Naive thymus-derived CD8-positive, alpha-beta T cell (primary cell): ENCODE measurements at regions of chr3 and their contacts with region 1.

Region 1: GRCh38 chr3:44510000-44510368 is 32.5 kb upstream of the ZNF445 start:
- DNase-seq: no peak
- ATAC-seq: peak; percentile 22 to 34
- H3K4me3 Mint-ChIP-seq: peak overlapping the region; percentile 93 to 100 (median 97)
- H3K27ac Mint-ChIP-seq: peak overlapping the region; percentile 95 to 98 (median 96)
- H3K4me1 Mint-ChIP-seq: peaks cover 8 to 56% (median 52%) of the 10 kb centered on the region in 4 donors
- H3K27me3 Mint-ChIP-seq: no peaks in the 10 kb centered on the region

Region 2: DNA sequence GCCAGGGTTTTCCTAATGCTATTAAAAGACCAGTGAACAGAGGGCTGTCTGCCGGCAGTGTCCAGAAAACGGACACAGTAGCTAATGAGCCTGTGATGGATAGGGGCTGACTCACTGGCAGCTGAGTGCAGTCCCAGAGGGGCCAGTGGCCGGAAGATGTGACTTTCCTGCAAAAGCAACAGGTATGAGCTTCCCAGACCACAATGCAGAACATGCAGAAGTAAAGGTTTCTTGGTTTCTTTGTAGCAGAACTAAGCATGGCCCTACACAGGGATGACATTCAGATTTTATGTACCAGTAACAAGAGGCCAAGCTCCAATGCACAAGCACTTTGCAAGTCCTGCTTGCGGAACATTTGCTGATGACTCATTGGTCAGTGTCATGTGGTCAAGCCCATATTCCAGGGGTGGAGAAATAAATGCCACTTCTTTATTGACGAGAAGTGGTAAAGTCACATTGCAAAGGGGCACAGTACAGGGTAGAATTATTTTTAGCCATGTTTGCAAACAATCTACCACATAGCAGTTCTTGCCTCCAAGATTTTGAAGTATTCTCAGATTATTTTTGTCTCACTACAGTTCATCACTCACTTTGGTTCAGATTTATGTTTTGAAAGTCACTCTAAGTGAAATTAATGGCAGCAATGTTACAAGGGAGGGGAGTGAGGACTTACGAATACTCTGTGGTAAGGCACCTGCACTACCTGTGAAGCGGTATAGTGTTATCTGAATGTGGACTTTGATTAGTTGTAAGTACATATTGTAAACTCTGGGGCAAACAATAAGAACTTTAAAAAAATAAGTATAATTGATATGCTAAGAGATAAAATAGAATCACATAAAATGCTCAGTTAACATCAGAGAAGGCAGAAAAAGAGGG is 555.9 kb before region 1 on chr3:
- POLR2A ChIA-PET with region 1: no interaction called
- DNase-seq: no peak
- ATAC-seq: no peak
- H3K4me3 Mint-ChIP-seq: no peak overlapping the region
- H3K27ac Mint-ChIP-seq: no peak overlapping the region
- H3K4me1 Mint-ChIP-seq: peaks cover 2 to 14% (median 8%) of the 10 kb centered on the region in 4 donors
- H3K27me3 Mint-ChIP-seq: peaks cover 6 to 19% (median 15%) of the 10 kb centered on the region in 5 donors

Region 3: DNA sequence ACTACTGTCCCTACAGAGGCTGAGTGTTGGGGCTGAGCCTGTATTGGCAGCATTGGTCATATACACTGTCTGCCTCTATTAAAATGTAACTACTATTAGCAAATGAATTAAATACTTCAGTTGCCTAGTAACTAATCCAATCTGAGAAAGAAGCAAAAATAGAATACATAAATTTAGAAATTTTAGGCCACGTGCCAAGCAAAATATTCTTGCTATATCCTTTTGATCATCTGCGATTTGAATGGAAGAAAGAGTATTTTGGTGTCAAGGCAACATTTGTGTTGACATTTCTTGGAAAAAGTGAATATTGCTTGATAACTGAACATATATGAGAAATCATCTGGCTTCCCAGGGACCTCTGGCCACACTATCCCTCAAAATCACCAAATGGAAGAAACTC is 416.5 kb before region 1 on chr3:
- POLR2A ChIA-PET with region 1: no interaction called
- DNase-seq: no peak
- ATAC-seq: no peak
- H3K4me3 Mint-ChIP-seq: no peak overlapping the region
- H3K27ac Mint-ChIP-seq: no peak overlapping the region
- H3K4me1 Mint-ChIP-seq: no peaks in the 10 kb centered on the region
- H3K27me3 Mint-ChIP-seq: peaks cover 0 to 54% (median 12%) of the 10 kb centered on the region in 5 donors

Region 4: GRCh38 chr3:44284949-44285348 is 225.0 kb before region 1 on chr3:
- POLR2A ChIA-PET with region 1: no interaction called
- DNase-seq: no peak
- ATAC-seq: no peak
- H3K4me3 Mint-ChIP-seq: no peak overlapping the region
- H3K27ac Mint-ChIP-seq: no peak overlapping the region
- H3K4me1 Mint-ChIP-seq: no peaks in the 10 kb centered on the region
- H3K27me3 Mint-ChIP-seq: peaks cover 1 to 14% (median 9%) of the 10 kb centered on the region in 5 donors

Region 5: GRCh38 chr3:44338010-44338827 is 171.8 kb before region 1 on chr3 and contains the start of gene TCAIM:
- POLR2A ChIA-PET with region 1: interaction called, 23 read pairs
- DNase-seq: peak; percentile 98 to 100 (median 99)
- ATAC-seq: peak; percentile 91 to 93
- H3K4me3 Mint-ChIP-seq: peak within 1 kb of the TSS; percentile 92 to 99 (median 97)
- H3K27ac Mint-ChIP-seq: peak within 1 kb of the TSS; percentile 87 to 99 (median 98)
- H3K4me1 Mint-ChIP-seq: peaks cover 12 to 38% (median 33%) of the 10 kb centered on the region in 4 donors
- H3K27me3 Mint-ChIP-seq: peaks cover 0 to 7% (median 5%) of the 10 kb centered on the region in 5 donors
- polyA plus RNA-seq, gene TCAIM: 12.1 to 14.0 (median 13.1) TPM

Region 6: DNA sequence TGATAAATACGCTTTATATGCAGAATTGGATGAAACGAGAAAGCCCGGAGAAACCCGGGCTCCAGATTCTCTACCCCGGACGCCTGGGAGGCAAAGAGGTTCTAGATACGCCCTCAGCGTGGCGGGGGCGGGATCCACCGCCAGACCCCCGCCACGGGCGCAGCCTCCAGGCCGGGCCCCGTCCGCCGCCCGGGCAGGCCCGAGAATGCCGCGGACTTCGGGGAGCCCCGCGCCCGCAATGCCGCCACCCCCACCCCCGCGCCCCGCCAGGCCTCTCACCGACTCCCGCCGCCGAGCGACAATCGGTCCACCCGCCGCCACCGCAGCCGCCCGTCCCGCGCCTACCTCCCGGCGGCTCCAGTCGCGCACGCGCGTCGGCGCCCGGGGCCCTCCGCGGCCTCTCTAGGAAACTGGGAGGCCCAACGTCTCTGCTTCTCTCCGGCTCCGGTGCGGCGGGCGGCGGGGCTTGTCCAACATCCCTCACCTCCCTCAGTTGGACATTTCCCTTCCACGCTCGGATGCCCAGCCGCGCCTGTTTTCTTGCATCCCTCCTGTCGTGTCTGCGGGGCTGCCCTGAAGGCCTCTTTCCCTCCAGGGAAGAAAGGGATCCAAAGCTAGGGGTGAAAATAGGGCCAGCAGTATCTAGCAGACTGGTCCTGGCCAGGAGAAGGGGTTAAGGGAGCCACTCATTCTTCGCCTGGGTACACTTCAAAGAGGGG is 32.5 kb before region 1 on chr3 and contains the start of gene ZNF445:
- POLR2A ChIA-PET with region 1: interaction called, 24 read pairs
- DNase-seq: peak; percentile 57 to 83 (median 71)
- ATAC-seq: peak; percentile 93
- H3K4me3 Mint-ChIP-seq: peak within 1 kb of the TSS; percentile 86 to 96 (median 94)
- H3K27ac Mint-ChIP-seq: peak within 1 kb of the TSS; percentile 63 to 94 (median 90)
- H3K4me1 Mint-ChIP-seq: peaks cover 18 to 43% (median 40%) of the 10 kb centered on the region in 4 donors
- H3K27me3 Mint-ChIP-seq: no peaks in the 10 kb centered on the region
- polyA plus RNA-seq, gene ZNF445: 2.8 to 3.3 (median 3.0) TPM

Region 7: DNA sequence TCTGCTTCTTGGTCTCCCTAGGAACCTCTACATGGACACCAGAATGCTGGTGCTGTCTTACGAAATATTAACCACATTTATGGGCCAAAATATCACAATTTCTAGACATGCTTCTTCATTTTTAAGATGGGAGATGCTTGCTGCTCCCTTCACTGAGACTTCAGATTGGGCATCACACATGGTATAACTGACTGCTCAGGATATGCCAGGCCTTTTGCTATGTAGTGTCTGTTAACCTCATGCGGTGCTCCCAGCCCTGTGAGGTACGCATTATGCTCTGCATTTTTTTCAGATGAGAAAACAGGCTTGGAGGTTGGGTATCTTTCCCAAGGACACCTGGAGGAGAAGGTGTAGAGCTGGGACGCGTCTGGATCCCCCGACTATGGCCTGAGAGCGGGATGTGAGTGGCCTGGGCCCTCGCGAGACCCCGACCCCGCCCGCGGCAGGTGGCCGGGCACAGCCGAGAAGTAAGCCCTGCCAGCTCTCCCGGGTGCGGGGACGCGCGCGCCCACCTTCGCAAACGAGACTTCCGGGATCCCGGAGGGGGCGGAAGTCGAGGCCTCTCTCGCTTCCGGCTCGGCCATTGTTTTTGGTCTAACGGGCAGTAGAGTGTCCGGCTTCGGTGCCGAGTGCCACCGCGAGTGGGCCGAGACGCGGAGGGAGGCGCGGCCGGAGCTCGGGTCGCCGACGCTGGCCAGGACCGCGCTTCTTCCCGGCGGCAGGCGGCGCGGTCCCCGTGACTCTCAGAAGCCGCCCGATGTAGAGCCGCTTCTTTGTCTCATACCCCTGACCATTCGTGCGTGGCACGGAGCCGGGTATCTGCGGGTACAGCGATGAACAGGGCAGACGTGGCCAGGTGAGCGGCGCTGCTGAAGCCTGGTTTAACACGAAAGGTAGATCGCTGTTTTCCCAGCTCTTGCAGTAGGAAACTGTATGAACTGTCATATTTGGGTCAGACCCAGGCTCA is 44.9 kb after region 1 on chr3 and contains the start of gene ZKSCAN7:
- POLR2A ChIA-PET with region 1: interaction called, 12 read pairs
- DNase-seq: peak; percentile 17 to 74 (median 48)
- ATAC-seq: peak; percentile 80 to 83
- H3K4me3 Mint-ChIP-seq: peak within 1 kb of the TSS; percentile 85 to 96 (median 92)
- H3K27ac Mint-ChIP-seq: peak within 1 kb of the TSS; percentile 15 to 96 (median 92)
- H3K4me1 Mint-ChIP-seq: peaks cover 10 to 32% (median 27%) of the 10 kb centered on the region in 4 donors
- H3K27me3 Mint-ChIP-seq: peaks cover 0 to 19% (median 4%) of the 10 kb centered on the region in 5 donors
- polyA plus RNA-seq, gene ZKSCAN7: 2.6 to 5.9 (median 5.1) TPM

Region 8: GRCh38 chr3:44761424-44762169 is 251.6 kb after region 1 on chr3 and contains the starts of genes KIAA1143 and KIF15:
- POLR2A ChIA-PET with region 1: interaction called, 10 read pairs
- DNase-seq: peak; percentile 91 to 98 (median 94)
- ATAC-seq: peak; percentile 96 to 99
- H3K4me3 Mint-ChIP-seq: peak within 1 kb of the TSS; percentile 87 to 96 (median 90)
- H3K27ac Mint-ChIP-seq: peak within 1 kb of the TSS; percentile 83 to 96 (median 90)
- H3K4me1 Mint-ChIP-seq: peaks cover 16 to 37% (median 35%) of the 10 kb centered on the region in 4 donors
- H3K27me3 Mint-ChIP-seq: peaks cover 0 to 16% (median 0%) of the 10 kb centered on the region in 5 donors
- polyA plus RNA-seq, gene KIAA1143: 24.1 to 34.9 (median 30.6) TPM
- polyA plus RNA-seq, gene KIF15: 0.08 TPM in 1 of 3 donors, not detected in the others